Endothelial cell of umbilical vein (primary cell): ENCODE measurements at regions of chr10 and their contacts with region 1.

Region 1: DNA sequence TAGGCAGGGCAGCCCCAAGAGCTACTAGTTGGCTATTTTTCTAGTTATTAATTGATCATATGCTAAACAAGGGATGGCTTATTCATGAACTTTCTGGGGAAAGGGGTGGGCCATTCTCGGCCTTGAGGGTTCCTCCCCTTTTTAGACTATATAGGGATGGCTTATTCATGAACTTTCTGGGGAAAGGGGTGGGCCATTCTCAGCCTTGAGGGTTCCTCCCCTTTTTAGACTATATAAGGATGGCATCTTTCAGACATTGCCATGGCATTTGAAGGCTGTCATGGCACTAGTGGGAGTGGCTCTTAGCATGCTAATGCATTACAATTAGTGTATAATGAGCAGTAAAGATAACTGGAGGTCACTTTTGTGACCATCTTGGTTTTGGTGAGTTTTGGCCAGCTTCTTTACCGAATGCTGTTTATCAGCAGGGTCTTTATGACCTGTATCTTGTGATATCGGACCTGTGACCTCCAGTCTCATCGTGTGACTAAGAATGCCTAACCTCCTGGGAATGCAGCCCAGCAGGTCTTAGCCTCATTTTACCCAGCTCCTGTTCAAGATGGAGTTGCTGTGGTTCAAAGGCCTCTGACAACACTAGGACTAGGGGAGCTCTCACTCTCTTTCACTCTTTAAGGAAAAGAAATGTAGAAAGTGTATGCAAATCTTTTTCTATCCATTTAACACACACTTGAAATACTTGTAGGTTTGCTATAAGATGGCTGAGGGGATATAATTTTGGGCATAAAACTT is 7.8 kb downstream of the FHIP2A start:
- DNase-seq: no peak
- H3K4me3 ChIP-seq: no peak overlapping the region
- H3K27ac ChIP-seq: no peak overlapping the region
- H3K4me1 ChIP-seq: peaks cover 22% of the 10 kb centered on the region
- H3K27me3 ChIP-seq: no peaks in the 10 kb centered on the region
- CTCF ChIP-seq: no peak
- POLR2A ChIP-seq: no peak

Region 2: DNA sequence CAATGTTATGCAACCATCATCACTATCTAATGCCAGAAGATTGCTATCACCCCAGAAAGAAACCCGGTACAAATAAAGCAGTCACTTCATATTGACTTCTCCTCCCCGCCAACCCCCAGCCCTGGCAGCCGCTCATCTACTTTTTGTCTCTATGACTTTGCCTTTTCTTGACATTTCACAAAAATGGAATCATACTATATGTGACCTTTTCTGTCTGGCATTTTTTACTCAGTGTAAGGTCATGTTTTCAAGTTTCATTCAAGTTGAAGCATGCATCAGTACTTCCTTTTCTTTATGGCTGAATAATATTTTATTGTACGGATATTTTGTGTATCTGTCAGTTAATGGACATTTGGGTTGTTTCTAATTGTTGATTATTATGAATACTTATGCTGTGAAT is 20.3 kb after region 1 on chr10:
- CTCF ChIA-PET with region 1: no interaction called
- POLR2A ChIA-PET with region 1: no interaction called
- dilution Hi-C with region 1: no loop called
- intact Hi-C with region 1: loop called (anchors 2 kb)
- DNase-seq: no peak
- H3K4me3 ChIP-seq: no peak overlapping the region
- H3K27ac ChIP-seq: no peak overlapping the region
- H3K4me1 ChIP-seq: peaks cover 1% of the 10 kb centered on the region
- H3K27me3 ChIP-seq: no peaks in the 10 kb centered on the region
- CTCF ChIP-seq: no peak
- POLR2A ChIP-seq: no peak